IMR-90 (cell line): ENCODE measurements at regions of chr4 and their contacts with region 1.

Region 1: DNA sequence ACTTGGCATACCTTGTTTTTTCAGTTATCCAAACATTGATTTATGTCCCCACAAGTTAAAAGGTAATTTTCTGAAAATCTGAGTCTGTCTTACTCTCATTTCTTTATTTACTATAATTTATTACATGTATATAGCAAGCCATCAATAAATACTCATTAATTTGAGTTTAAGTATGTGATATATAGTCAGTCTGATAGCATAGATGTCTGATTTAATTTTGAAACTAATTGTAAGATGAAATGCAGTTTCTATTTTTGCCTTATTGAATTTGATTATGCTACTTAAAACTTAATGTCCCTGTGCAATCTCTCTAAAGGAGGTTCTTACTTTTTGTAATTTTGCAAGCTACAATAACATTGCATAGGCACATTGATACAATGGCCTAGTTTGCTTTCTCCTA is 2418.6 kb downstream of the ARAP2 start:
- DNase-seq: no peak
- ATAC-seq: no peak
- H3K4me3 ChIP-seq: no peak overlapping the region
- H3K27ac ChIP-seq: no peak overlapping the region
- H3K4me1 ChIP-seq: no peaks in the 10 kb centered on the region
- H3K27me3 ChIP-seq: no peaks in the 10 kb centered on the region
- CTCF ChIP-seq: no peak
- POLR2A ChIP-seq: no peak
- RAD21 ChIP-seq: no peak

Region 2: GRCh38 chr4:33837043-33837838 is 11.6 kb after region 1 on chr4:
- CTCF ChIA-PET with region 1: no interaction called
- POLR2A ChIA-PET with region 1: no interaction called
- dilution Hi-C with region 1: no loop called
- in situ Hi-C with region 1: no loop called
- intact Hi-C with region 1: no loop called
- DNase-seq: peak; percentile 80
- ATAC-seq: peak; percentile 82
- H3K4me3 ChIP-seq: no peak overlapping the region
- H3K27ac ChIP-seq: no peak overlapping the region
- H3K4me1 ChIP-seq: peaks cover 5% of the 10 kb centered on the region
- H3K27me3 ChIP-seq: no peaks in the 10 kb centered on the region
- CTCF ChIP-seq: no peak
- POLR2A ChIP-seq: no peak
- RAD21 ChIP-seq: no peak

Region 3: GRCh38 chr4:33864290-33864859 is 38.7 kb after region 1 on chr4:
- CTCF ChIA-PET with region 1: no interaction called
- POLR2A ChIA-PET with region 1: no interaction called
- dilution Hi-C with region 1: no loop called
- in situ Hi-C with region 1: no loop called
- intact Hi-C with region 1: loop called (anchors 5 kb)
- DNase-seq: no peak
- ATAC-seq: no peak
- H3K4me3 ChIP-seq: no peak overlapping the region
- H3K27ac ChIP-seq: no peak overlapping the region
- H3K4me1 ChIP-seq: no peaks in the 10 kb centered on the region
- H3K27me3 ChIP-seq: no peaks in the 10 kb centered on the region
- CTCF ChIP-seq: no peak
- POLR2A ChIP-seq: no peak
- RAD21 ChIP-seq: no peak

Region 4: GRCh38 chr4:33941854-33942253 is 116.2 kb after region 1 on chr4:
- CTCF ChIA-PET with region 1: no interaction called
- POLR2A ChIA-PET with region 1: no interaction called
- dilution Hi-C with region 1: no loop called
- in situ Hi-C with region 1: no loop called
- intact Hi-C with region 1: no loop called
- DNase-seq: no peak
- ATAC-seq: no peak
- H3K4me3 ChIP-seq: no peak overlapping the region
- H3K27ac ChIP-seq: no peak overlapping the region
- H3K4me1 ChIP-seq: no peaks in the 10 kb centered on the region
- H3K27me3 ChIP-seq: no peaks in the 10 kb centered on the region
- CTCF ChIP-seq: no peak
- POLR2A ChIP-seq: no peak
- RAD21 ChIP-seq: no peak

Region 5: GRCh38 chr4:34112573-34112972 is 286.9 kb after region 1 on chr4:
- CTCF ChIA-PET with region 1: no interaction called
- POLR2A ChIA-PET with region 1: no interaction called
- dilution Hi-C with region 1: no loop called
- in situ Hi-C with region 1: no loop called
- intact Hi-C with region 1: no loop called
- DNase-seq: no peak
- ATAC-seq: no peak
- H3K4me3 ChIP-seq: no peak overlapping the region
- H3K27ac ChIP-seq: no peak overlapping the region
- H3K4me1 ChIP-seq: no peaks in the 10 kb centered on the region
- H3K27me3 ChIP-seq: no peaks in the 10 kb centered on the region
- CTCF ChIP-seq: no peak
- POLR2A ChIP-seq: no peak
- RAD21 ChIP-seq: no peak